ENCODE measurements at regions of chr9 and their contacts with region 1.

Region 1: DNA sequence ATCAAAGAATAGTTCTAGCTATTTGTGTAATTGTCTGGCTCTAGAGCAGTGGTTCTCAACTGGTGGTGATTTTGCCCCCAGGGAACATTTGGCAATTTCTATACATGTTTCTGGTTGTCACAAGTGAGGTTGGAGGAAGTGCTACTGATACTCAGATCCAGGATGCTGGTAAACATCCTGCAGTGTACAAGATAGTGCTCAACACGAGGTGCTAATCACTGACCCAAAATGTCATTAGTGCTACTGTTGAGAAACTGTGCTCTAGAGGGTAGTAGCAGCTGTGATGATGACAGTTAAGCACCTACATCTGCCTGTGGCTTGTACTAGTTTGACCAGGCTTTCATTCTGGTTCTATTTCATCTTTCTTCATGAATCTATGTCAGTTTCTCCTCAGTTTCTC is 22.1 kb downstream of the LRRC19 start:
- DNase-seq: no peak

Region 2: DNA sequence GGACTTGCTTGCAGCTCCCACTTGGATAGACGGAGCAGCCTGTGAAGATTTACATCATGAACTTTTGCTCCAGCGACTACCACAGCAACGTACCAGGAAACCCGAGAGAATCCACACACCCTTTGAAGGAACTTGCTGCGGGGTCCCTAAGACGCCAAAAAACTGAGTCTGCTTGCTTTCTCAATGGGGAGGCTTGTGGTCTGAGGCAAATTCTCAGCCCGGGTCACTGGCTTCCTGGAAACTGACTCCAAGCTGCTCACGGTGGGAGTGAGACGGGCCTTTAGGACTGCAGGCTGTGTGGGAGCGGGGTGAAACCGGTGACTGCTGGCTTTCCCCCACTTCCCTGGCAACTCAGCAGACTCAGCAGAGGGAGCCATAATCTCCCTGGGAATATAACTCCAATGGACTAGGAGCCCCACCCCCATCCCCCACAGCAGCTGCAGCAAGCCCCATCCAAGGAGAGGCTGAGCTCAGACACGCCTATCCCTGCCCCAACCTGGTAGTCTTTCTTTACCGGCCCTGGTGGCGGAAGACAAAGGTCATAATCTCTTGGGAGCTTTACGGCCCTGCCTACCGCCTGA is 556.7 kb before region 1 on chr9:
- intact Hi-C with region 1: loop called in 1 of 2 experiments (anchors 5 kb)
- DNase-seq: peak; percentile 47

Measured in posterior vena cava (tissue), 2 donors.